A549 (cell line): ENCODE measurements at regions of chr14 and their contacts with region 1.

Region 1: DNA sequence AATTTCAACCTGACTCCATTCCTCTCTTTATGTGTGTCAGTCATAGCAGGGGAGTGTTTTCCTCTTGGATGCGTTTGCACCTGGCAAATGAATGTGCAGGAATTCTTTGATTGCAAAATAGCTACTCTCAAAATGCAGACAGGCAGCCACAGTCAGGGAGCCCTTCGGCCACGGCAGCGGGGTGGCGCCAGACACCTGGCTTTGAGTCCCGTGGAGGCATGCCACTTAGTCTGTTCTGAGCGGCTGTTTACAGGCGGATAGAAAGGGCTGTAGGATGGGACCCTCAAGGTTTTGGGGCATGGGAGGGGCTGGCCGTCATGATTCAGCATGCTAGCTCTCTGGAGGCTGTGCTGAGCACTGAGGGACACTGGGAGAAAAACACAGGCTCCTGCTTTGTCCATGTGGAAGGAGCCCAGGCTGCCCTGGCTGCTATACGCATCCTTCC is 117.1 kb downstream of the SLC25A47 start:
- DNase-seq: peak; percentile 81 to 89
- ATAC-seq: peak; percentile 83 to 93
- H3K4me3 ChIP-seq: no peak overlapping the region
- H3K27ac ChIP-seq: peak overlapping the region; percentile 70 to 83
- H3K4me1 ChIP-seq: peaks cover 61% of the 10 kb centered on the region
- CTCF ChIP-seq: peak; percentile 90
- EP300 ChIP-seq: no peak
- POLR2A ChIP-seq: no peak
- RAD21 ChIP-seq: peak; percentile 97 to 98

Region 2: GRCh38 chr14:100370003-100370402 is 70.2 kb before region 1 on chr14:
- CTCF ChIA-PET with region 1: no interaction called
- POLR2A ChIA-PET with region 1: no interaction called
- DNase-seq: no peak
- ATAC-seq: no peak
- H3K4me3 ChIP-seq: no peak overlapping the region
- H3K27ac ChIP-seq: no peak overlapping the region
- H3K4me1 ChIP-seq: peaks cover 7% of the 10 kb centered on the region; the same call in 2 of the 3 replicates
- CTCF ChIP-seq: no peak
- EP300 ChIP-seq: no peak
- POLR2A ChIP-seq: no peak
- RAD21 ChIP-seq: no peak

Region 3: GRCh38 chr14:100417466-100417865 is 22.7 kb before region 1 on chr14:
- CTCF ChIA-PET with region 1: interaction called, 69 read pairs
- POLR2A ChIA-PET with region 1: no interaction called
- DNase-seq: peak; percentile 88 to 94
- ATAC-seq: peak; percentile 97 to 98
- H3K4me3 ChIP-seq: no peak overlapping the region
- H3K27ac ChIP-seq: peak overlapping the region; percentile 73 to 90
- H3K4me1 ChIP-seq: peaks cover 26% of the 10 kb centered on the region
- CTCF ChIP-seq: peak; percentile 77
- EP300 ChIP-seq: no peak
- POLR2A ChIP-seq: no peak
- RAD21 ChIP-seq: peak; percentile 84 to 93

Region 4: DNA sequence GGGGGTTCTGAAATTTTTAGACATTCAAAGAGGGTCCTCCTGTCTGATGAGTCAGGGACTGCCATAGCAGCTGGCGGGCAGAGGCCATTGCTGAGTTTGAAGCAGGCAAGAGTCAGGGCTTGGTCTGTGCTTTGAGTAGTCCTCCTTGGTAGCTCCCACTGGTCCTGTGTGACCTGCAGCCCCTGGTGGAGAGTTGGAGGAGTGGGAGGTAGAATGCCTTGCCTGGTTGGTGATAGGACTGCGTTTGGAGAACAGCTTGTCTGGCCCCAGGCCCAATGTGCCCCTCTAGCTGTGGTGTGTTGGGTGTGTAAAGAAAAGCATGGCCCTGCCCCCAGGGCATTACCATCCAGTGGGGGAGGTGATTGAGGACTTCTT is 30.3 kb after region 1 on chr14:
- CTCF ChIA-PET with region 1: interaction called, 41 read pairs
- POLR2A ChIA-PET with region 1: interaction called, 10 read pairs
- DNase-seq: no peak
- ATAC-seq: peak in 1 of 2 experiments; percentile 69; a peak in 3 of 6 replicates
- H3K4me3 ChIP-seq: no peak overlapping the region
- H3K27ac ChIP-seq: no peak overlapping the region
- H3K4me1 ChIP-seq: peaks cover 11% of the 10 kb centered on the region
- CTCF ChIP-seq: no peak
- EP300 ChIP-seq: no peak
- POLR2A ChIP-seq: no peak
- RAD21 ChIP-seq: no peak

Region 5: GRCh38 chr14:100486025-100486828 is 46.0 kb after region 1 on chr14:
- CTCF ChIA-PET with region 1: interaction called, 12 read pairs
- POLR2A ChIA-PET with region 1: no interaction called
- DNase-seq: peak; percentile 35 to 53
- ATAC-seq: peak; percentile 78 to 84; a peak in 4 of 6 replicates
- H3K4me3 ChIP-seq: no peak overlapping the region
- H3K27ac ChIP-seq: no peak overlapping the region
- H3K4me1 ChIP-seq: no peaks in the 10 kb centered on the region
- CTCF ChIP-seq: no peak
- EP300 ChIP-seq: no peak
- POLR2A ChIP-seq: no peak
- RAD21 ChIP-seq: no peak

Region 6: DNA sequence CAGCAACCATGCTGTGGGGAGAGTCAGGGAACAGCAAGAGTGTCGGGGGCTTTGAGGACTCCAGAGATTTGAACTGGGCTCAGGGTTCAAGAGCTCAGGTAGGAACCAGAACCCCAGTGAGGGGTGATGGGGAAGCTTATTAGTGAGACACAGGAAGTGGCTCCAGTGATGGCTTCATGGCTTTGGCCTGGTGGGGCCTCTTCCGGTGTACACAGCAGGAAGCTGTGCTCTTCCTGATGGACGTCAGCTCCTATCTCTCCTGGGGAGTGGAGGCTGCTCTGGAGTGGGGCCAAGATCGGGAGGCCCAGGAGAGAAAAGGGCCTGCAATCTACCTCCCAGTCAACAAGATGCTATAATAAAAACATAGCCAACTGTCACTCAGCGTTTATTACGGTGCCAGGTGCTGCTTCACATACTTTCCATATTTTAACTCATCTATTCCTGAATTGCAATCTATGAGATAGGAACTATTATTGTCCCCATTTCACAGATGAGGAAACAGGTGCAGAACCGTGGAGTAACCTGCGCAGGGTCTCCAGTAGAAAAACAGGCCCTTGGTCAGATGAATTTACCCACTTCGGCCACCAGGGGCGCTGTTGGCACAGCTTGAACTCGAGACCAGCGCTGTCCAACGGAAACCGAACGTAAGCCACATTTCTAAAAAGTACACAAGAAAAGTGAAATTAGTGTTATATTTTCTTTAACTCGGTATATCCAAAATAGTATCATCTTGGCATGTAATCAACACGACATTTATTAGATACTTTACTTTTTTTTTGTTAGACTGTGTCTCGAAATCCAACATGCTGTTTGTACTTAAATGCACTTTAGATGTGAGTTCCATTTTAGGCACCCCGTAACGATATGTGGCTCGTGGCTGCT is 222.9 kb after region 1 on chr14:
- CTCF ChIA-PET with region 1: interaction called, 110 read pairs
- POLR2A ChIA-PET with region 1: no interaction called
- DNase-seq: peak; percentile 75 to 77
- ATAC-seq: peak in 1 of 2 experiments; percentile 80; a peak in 3 of 6 replicates
- H3K4me3 ChIP-seq: no peak overlapping the region
- H3K27ac ChIP-seq: peak overlapping the region in 1 of 2 experiments; percentile 25; a peak in 1 of 6 replicates
- H3K4me1 ChIP-seq: peaks cover 21% of the 10 kb centered on the region
- CTCF ChIP-seq: peak; percentile 93
- EP300 ChIP-seq: no peak
- POLR2A ChIP-seq: no peak
- RAD21 ChIP-seq: peak; percentile 80 to 87